ENCODE measurements at regions of chr16 and their contacts with region 1.

Region 1: GRCh38 chr16:86899757-86900156 is 321.4 kb downstream of the FOXL1 start:
- DNase-seq: no peak
- ATAC-seq: no peak

Region 2: GRCh38 chr16:86285938-86286921 is 613.5 kb before region 1 on chr16:
- intact Hi-C with region 1: no loop called
- DNase-seq: no peak
- ATAC-seq: no peak

Region 3: DNA sequence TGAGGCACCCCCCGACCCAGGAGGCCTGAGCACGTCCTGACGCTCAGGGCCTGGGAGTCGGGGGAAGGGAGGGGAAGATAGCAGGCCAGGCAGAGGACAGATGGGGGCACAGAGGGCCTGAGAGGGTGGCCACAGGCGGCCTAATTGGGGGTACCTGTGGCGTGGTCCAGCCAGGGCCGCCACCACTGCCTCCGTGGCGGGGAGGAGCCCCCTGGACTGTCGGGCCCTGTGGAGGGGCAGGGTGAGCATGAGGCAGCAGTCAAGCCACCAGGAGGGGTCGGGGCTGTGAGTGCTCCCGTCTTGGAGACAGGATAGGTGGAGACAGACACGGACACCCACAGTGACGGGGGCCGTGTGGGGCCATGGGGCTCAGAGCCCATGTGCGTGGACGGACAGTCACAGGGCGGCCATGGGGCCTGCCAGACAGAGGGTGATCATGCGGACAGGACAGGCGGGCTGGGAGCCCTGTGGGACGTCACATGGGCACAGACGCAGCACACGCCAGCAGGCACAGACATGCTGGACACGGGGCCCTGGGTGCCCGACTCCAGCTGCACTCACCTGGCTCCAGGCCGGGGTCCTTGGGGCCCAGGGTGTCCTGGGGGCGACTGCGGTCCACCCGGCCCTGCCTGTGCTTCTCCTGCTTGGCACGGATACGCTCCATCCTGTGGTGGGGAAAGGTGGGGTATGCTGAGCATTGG is 1825.2 kb after region 1 on chr16:
- intact Hi-C with region 1: loop called (anchors 5 kb)
- DNase-seq: no peak
- ATAC-seq: no peak